ENCODE measurements at regions of chr14 and their contacts with region 1.

Region 1: DNA sequence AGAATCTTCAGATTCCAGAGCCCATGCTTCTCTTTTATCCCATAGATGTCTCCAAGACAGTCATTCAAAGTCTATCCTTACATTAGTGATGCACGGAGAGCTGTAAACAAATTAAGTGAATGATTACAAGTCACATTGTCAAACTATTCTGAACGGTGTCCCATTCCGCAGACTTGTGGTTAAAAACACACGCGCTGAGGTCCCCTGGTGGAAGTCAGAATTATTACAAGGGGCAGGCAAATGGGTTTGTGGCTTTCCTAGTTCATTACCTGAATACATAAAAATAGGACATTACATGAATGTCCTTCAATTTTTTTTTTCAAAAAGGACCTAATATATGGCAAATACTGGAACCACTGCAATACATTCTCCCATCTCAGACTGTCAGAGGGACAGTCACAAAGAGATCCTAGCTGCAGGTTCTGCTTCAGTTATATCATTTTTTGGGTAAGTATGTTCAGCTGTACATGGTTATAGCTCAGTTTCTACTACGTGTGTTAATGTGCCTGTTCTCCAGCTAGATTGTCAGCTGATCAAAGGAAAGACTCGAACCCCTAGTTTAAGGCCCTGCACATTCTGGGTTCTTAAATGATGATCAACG is 53.1 kb upstream of the STON2 start:
- DNase-seq: peak; percentile 48
- ATAC-seq: peak; percentile 86
- H3K4me3 ChIP-seq: no peak overlapping the region
- H3K27ac ChIP-seq: no peak overlapping the region
- H3K4me1 ChIP-seq: no peaks in the 10 kb centered on the region
- H3K27me3 ChIP-seq: no peaks in the 10 kb centered on the region; the same call in 1 of the 2 replicates
- CTCF ChIP-seq: peak; percentile 67 to 91 (median 86)
- POLR2A ChIP-seq: no peak
- RAD21 ChIP-seq: peak; percentile 86

Region 2: DNA sequence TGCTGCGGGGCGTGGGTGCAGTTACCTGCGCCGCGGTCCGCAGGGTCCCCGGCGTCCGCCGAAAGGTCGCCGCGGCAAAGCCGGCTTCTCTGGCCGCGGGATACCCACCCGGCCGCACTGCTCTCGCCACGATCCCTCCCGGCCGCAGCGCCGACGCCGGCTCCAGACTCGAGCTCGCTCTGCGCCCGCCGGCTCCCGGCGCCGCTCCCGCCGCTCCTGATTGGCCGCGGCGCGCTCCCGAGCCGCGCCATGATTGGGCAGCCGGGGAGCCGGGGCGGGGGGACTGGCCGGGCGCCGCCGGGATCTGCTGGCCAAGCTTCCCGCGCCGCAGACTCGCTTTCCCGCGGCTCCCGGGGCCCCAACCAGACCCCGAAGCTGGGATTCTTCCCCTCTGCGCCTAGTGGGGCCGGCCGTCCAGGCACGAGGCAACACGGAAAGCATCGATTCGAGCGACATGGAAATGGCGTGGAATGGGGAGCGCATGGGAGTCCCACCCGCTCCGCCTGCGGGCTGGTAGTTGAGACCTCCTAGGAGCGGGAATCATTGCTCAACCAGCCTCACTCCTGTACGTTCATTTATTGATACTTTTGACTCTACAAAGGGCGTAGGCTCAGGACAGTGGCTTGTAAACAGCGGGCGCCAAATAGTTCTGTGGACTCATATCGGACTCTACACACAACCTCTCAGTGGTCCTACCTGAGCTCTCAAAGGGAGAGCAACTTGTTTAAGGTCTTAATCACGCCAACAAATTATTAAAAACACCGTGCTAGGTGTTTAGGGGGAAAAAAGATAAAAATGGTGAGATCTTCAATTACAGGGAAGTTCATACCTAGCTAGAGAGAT is 16.7 kb before region 1 on chr14:
- CTCF ChIA-PET with region 1: interaction called, 11 read pairs
- POLR2A ChIA-PET with region 1: no interaction called
- RAD21 ChIA-PET with region 1: no interaction called
- intact Hi-C with region 1: no loop called
- DNase-seq: peak; percentile 21
- ATAC-seq: peak; percentile 96
- H3K4me3 ChIP-seq: peak overlapping the region; percentile 45 to 59
- H3K27ac ChIP-seq: no peak overlapping the region
- H3K4me1 ChIP-seq: peaks cover 9 to 16% of the 10 kb centered on the region in 2 experiments; a peak in 3 of 4 replicates
- H3K27me3 ChIP-seq: peaks cover 48% of the 10 kb centered on the region
- CTCF ChIP-seq: no peak
- POLR2A ChIP-seq: no peak
- RAD21 ChIP-seq: no peak

Region 3: GRCh38 chr14:82230748-82231147 is 777.5 kb after region 1 on chr14:
- CTCF ChIA-PET with region 1: no interaction called
- POLR2A ChIA-PET with region 1: no interaction called
- RAD21 ChIA-PET with region 1: no interaction called
- intact Hi-C with region 1: no loop called
- DNase-seq: no peak
- ATAC-seq: no peak
- H3K4me3 ChIP-seq: no peak overlapping the region
- H3K27ac ChIP-seq: no peak overlapping the region
- H3K4me1 ChIP-seq: no peaks in the 10 kb centered on the region
- H3K27me3 ChIP-seq: no peaks in the 10 kb centered on the region
- CTCF ChIP-seq: no peak
- POLR2A ChIP-seq: no peak
- RAD21 ChIP-seq: no peak

Region 4: DNA sequence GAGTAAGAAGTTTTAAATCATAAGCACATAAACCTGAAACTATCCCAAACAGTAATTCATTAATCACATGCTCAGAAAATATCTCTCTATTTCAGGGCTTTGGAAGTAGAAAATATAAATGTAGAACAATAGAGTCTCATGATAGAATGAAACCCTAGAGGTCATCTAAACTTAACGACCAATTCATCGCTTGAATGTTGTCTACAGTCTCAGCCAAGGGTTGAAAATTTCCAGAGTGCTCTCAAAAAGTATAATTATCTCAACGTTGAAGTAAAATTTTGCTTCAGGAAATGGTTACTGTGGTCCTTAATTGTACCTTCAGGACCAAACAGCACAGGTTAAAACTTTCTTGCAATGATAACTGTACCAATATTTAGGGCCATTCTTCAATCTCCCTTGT is 1134.0 kb after region 1 on chr14:
- CTCF ChIA-PET with region 1: no interaction called
- POLR2A ChIA-PET with region 1: no interaction called
- RAD21 ChIA-PET with region 1: no interaction called
- intact Hi-C with region 1: no loop called
- DNase-seq: no peak
- ATAC-seq: no peak
- H3K4me3 ChIP-seq: no peak overlapping the region
- H3K27ac ChIP-seq: no peak overlapping the region
- H3K4me1 ChIP-seq: no peaks in the 10 kb centered on the region
- H3K27me3 ChIP-seq: no peaks in the 10 kb centered on the region
- CTCF ChIP-seq: no peak
- POLR2A ChIP-seq: no peak
- RAD21 ChIP-seq: no peak